Activated CD4-positive, alpha-beta T cell treated with anti-CD3 and anti-CD28 coated beads, Interleukin-2, amount 10 ng/mL, durations not matched to agents 24 days and 14 days (primary cell): ENCODE measurements at regions of chr6 and their contacts with region 1.

Region 1: DNA sequence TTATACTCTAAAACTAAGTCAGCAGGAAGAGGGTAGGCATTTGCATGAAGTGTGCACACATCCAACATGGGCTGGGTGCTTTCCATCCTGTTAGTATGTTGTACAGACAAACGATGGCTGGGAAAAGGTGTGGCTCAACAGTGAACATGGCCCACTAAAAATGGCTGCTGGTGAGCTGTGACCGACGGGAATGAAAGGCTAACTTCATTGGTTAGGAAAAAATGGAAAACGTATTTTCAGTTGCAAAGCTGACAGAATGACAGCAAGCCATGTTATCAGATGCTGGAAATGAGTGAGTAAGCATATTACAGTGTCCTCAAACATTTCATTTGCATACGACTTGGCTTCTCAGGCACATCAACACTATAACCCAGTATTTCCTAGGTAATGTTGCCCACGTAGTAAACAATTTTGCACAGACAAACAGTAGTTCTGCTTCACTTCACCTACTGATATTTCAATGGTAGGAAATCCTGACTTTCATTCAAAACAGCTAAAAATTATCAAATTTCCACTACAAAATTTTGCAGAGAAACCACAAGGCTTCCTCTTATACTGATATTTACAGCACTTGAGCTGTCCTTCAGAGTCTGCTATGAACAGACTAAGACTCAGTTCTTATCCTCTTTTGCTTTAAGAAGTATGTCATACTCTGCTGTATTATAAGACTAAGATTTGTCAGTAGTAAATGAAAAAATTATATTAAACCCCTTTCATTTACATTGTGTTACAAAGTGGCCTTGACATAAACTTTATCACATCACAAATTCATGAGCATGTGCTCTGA is 98.9 kb downstream of the IRF4 start:
- DNase-seq: peak; percentile 82
- H3K4me3 Mint-ChIP-seq: peak overlapping the region; percentile 77
- H3K27ac Mint-ChIP-seq: peak overlapping the region; percentile 99
- H3K4me1 Mint-ChIP-seq: peaks cover 87% of the 10 kb centered on the region
- H3K27me3 Mint-ChIP-seq: no peaks in the 10 kb centered on the region

Region 2: GRCh38 chr6:195861-196360 is 294.5 kb before region 1 on chr6:
- intact Hi-C with region 1: loop called (anchors 2 kb)
- DNase-seq: peak; percentile 85
- H3K4me3 Mint-ChIP-seq: peak overlapping the region; percentile 21
- H3K27ac Mint-ChIP-seq: peak overlapping the region; percentile 74
- H3K4me1 Mint-ChIP-seq: peaks cover 44% of the 10 kb centered on the region
- H3K27me3 Mint-ChIP-seq: peaks cover 2% of the 10 kb centered on the region

Region 3: GRCh38 chr6:336159-337019 is 154.1 kb before region 1 on chr6:
- intact Hi-C with region 1: loop called (anchors 5 kb)
- DNase-seq: peak; percentile 71
- H3K4me3 Mint-ChIP-seq: peak overlapping the region; percentile 65
- H3K27ac Mint-ChIP-seq: peak overlapping the region; percentile 75
- H3K4me1 Mint-ChIP-seq: peaks cover 45% of the 10 kb centered on the region
- H3K27me3 Mint-ChIP-seq: no peaks in the 10 kb centered on the region

Region 4: GRCh38 chr6:399785-400534 is 90.5 kb before region 1 on chr6:
- intact Hi-C with region 1: loop called (anchors 2 kb)
- DNase-seq: peak; percentile 87
- H3K4me3 Mint-ChIP-seq: peak overlapping the region; percentile 80
- H3K27ac Mint-ChIP-seq: peak overlapping the region; percentile 87
- H3K4me1 Mint-ChIP-seq: peaks cover 88% of the 10 kb centered on the region
- H3K27me3 Mint-ChIP-seq: no peaks in the 10 kb centered on the region

Region 5: DNA sequence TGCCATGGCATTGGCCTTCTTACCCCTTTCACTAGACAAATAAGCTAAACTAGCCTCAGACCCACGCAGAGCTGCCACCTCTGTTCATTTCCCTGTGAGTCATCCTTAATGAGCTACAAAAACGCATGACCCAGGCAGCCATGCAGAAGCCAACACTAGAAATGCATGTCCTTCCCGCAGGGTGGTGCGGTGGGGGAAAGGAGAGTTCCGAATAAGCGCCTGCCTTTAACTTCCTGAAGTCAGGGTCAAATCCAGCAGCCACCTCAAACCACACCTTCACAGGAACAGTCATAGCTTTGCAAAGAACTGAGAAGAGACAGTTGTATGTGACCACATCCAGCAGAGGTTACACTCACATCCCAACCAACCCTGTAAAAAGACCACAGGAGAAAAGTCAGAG is 58.5 kb before region 1 on chr6:
- intact Hi-C with region 1: loop called (anchors 1 kb)
- DNase-seq: peak; percentile 90
- H3K4me3 Mint-ChIP-seq: peak overlapping the region; percentile 14
- H3K27ac Mint-ChIP-seq: peak overlapping the region; percentile 67
- H3K4me1 Mint-ChIP-seq: peaks cover 72% of the 10 kb centered on the region
- H3K27me3 Mint-ChIP-seq: no peaks in the 10 kb centered on the region

Region 6: GRCh38 chr6:506508-506907 is 16.1 kb after region 1 on chr6:
- intact Hi-C with region 1: loop called (anchors 1 kb)
- DNase-seq: peak; percentile 77
- H3K4me3 Mint-ChIP-seq: peak overlapping the region; percentile 75
- H3K27ac Mint-ChIP-seq: peak overlapping the region; percentile 98
- H3K4me1 Mint-ChIP-seq: peaks cover 90% of the 10 kb centered on the region
- H3K27me3 Mint-ChIP-seq: no peaks in the 10 kb centered on the region